Endothelial cell of umbilical vein (primary cell): ENCODE measurements at regions of chr4 and their contacts with region 1.

Region 1: DNA sequence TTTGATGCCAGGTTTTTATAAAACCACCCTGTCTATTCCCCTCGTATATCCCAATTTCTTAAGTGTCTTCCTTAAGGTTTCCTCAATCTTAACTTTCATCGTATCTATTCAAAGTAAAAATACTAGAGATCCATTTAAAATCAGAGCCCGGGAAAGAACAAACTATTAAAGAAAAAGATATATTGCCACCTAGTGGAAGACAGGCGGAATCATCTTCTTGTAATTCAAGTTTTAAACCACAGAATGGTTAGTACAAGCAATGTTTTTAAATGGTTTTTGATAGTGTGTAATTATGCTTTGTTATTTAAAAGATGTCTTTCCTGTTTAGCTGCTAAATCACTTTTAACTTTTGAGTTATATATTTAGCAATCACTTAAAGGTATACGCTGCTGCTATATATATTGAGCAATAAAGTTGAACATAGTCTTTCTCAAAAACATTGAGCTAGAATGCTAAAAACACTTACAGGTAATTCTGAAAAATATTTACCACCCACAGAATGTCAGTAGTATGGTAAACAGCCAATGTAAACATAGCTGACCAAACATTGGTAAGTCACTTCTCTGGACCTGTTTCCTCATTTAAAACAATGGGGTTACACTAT is 18.2 kb downstream of the PRDM8 start:
- DNase-seq: peak; percentile 44
- H3K4me3 ChIP-seq: no peak overlapping the region
- H3K27ac ChIP-seq: no peak overlapping the region
- H3K4me1 ChIP-seq: no peaks in the 10 kb centered on the region
- H3K27me3 ChIP-seq: peaks cover 20 to 47% of the 10 kb centered on the region in 2 experiments
- CTCF ChIP-seq: peak; percentile 33 to 38
- POLR2A ChIP-seq: no peak

Region 2: GRCh38 chr4:79042079-79042674 is 1173.4 kb before region 1 on chr4:
- CTCF ChIA-PET with region 1: interaction called, 19 read pairs
- POLR2A ChIA-PET with region 1: no interaction called
- dilution Hi-C with region 1: no loop called
- intact Hi-C with region 1: loop called (anchors 1 kb)
- DNase-seq: peak; percentile 32
- H3K4me3 ChIP-seq: no peak overlapping the region
- H3K27ac ChIP-seq: no peak overlapping the region
- H3K4me1 ChIP-seq: no peaks in the 10 kb centered on the region
- H3K27me3 ChIP-seq: no peaks in the 10 kb centered on the region
- CTCF ChIP-seq: peak; percentile 11 to 15
- POLR2A ChIP-seq: no peak

Region 3: DNA sequence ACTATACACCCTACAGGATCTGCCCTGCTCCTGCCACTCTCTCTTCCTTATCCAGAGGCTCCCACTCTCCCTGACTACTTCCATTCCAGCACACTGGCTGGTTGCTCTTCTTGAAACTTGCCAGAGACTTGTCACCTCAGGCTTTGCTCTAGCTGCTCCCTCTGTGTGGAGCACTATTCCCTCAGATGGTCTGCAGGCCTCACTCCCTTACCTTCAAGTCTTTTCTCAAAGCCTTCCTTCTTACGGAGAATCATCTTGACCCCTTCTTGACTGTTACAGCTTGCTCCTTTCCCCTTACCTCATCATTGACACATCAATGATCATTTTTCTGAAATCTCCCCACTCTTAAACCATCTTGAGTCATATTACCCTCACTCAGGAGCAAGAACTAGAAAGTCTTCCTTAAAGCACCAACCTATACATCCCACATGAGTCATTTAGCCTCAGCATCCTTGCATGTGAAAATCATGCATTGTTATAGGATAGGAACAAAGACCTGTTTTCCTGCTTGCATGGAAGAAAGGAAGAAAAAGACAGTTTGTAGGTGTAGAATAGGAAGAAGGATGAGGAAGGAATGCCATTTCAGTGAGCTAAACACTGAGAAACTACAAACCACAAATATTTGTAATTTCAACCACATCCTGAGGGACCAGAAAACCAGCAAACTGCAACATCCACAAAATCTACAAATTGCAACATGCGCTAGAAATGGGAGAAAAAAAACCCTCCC is 198.3 kb before region 1 on chr4:
- CTCF ChIA-PET with region 1: no interaction called
- POLR2A ChIA-PET with region 1: no interaction called
- dilution Hi-C with region 1: no loop called
- intact Hi-C with region 1: no loop called
- DNase-seq: peak; percentile 3
- H3K4me3 ChIP-seq: no peak overlapping the region
- H3K27ac ChIP-seq: peak overlapping the region; percentile 63
- H3K4me1 ChIP-seq: peaks cover 29% of the 10 kb centered on the region
- H3K27me3 ChIP-seq: no peaks in the 10 kb centered on the region
- CTCF ChIP-seq: no peak
- POLR2A ChIP-seq: no peak

Region 4: DNA sequence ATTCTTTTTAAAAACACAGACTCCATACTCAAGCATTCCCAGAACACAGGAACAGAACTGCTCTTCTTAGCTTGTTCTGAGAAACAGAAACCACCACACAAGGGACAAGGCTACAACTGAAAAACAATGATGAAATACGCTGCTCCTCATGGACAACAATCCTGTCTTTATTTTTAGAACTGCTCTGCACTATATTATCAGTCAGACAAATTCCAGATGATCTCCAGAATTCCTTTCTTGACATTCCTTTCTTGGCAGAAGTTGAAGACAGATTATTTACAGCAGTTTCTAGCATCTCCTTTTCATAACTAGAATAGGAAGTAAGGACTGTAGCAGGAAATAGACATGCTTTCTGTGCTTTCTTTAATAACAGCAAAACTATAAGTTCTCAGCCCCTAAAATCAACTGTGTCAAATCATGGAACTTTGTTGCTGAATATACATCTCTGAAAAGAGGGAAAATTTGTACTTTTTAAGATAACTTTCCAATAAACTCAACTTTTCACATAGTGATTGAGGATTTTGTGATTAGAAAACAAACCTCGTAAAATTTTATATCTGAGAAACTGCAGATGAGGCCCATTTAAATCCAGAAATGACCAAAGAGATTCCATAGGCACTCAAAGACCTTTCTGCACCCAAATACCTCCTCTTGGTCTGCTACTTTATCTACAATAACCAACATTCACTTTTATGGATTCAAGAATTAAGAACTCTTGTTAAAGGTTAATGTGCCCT is 178.4 kb before region 1 on chr4:
- CTCF ChIA-PET with region 1: no interaction called
- POLR2A ChIA-PET with region 1: no interaction called
- dilution Hi-C with region 1: no loop called
- intact Hi-C with region 1: no loop called
- DNase-seq: peak; percentile 64
- H3K4me3 ChIP-seq: peak overlapping the region in 1 of 3 experiments; percentile 37
- H3K27ac ChIP-seq: peak overlapping the region; percentile 70
- H3K4me1 ChIP-seq: peaks cover 38% of the 10 kb centered on the region
- H3K27me3 ChIP-seq: no peaks in the 10 kb centered on the region
- CTCF ChIP-seq: no peak
- POLR2A ChIP-seq: no peak

Region 5: DNA sequence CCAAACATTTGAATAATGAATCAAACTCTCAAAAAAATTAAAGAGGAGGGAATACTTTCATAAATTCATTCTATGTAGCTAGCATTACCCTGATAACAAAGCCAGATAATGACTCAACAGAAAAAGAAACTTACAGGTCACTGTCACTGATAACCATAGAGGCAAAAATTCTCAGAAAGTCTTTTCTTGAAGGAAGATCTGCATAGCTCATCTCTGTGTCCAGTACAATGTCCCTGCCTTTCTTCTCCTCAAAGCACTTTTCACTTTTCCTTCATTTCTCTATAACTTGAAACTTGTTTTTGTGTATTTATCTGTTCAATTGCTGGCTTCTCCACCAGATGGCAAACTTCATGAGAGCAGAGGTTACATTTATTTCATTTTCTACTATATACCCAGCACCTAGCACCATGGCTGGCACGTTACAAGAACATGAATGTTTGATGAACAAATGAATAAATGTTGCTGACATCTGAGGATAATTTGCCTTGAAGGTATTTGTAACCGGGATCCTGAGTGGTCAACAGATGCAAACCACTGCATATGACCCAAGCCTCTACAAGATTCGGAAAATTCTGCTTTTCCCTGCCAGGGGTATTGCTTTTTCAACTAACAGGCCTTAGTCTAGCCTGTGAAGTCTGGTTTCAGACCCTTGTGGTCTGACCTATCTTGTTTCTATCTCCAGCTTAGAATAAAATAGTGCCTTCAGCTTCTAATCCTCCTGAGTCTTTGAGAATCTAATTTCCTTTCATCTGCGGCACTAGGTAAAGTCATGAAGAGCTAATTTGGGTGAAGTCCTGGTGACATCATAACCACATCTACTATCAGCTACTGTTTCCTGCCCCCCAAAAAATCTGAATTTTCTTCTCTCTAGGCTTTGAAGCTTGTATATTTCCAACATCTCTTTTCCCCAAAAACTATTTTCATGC is 90.0 kb before region 1 on chr4:
- CTCF ChIA-PET with region 1: interaction called, 7 read pairs
- POLR2A ChIA-PET with region 1: no interaction called
- dilution Hi-C with region 1: no loop called
- intact Hi-C with region 1: loop called (anchors 1 kb)
- DNase-seq: peak; percentile 65
- H3K4me3 ChIP-seq: no peak overlapping the region
- H3K27ac ChIP-seq: peak overlapping the region; percentile 82
- H3K4me1 ChIP-seq: peaks cover 43% of the 10 kb centered on the region
- H3K27me3 ChIP-seq: no peaks in the 10 kb centered on the region
- CTCF ChIP-seq: peak; percentile 40
- POLR2A ChIP-seq: no peak

Region 6: DNA sequence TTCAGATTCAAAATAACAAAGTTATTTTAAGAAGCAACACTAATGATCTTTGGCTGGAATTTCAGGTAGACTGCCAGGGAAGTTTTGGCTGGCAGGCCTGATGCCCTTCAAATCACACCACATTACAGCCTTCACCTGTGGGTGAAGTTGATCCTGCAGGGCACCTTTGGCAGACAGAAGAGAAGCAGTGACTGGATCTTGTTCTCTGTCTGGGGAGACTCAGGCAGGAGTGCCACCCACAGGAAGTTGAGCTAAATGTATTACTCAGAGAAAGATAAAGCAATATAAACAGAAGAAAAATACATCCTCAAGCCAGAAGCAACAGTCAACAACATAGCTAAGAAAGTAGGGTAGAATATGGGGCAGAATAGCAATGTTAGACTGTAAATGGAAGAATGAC is 107.2 kb after region 1 on chr4:
- CTCF ChIA-PET with region 1: interaction called, 56 read pairs
- POLR2A ChIA-PET with region 1: no interaction called
- dilution Hi-C with region 1: no loop called
- intact Hi-C with region 1: no loop called
- DNase-seq: peak; percentile 24
- H3K4me3 ChIP-seq: no peak overlapping the region
- H3K27ac ChIP-seq: no peak overlapping the region
- H3K4me1 ChIP-seq: no peaks in the 10 kb centered on the region
- H3K27me3 ChIP-seq: no peaks in the 10 kb centered on the region
- CTCF ChIP-seq: no peak
- POLR2A ChIP-seq: no peak

Region 7: GRCh38 chr4:81052119-81053068 is 836.8 kb after region 1 on chr4:
- CTCF ChIA-PET with region 1: interaction called, 3 read pairs
- POLR2A ChIA-PET with region 1: no interaction called
- dilution Hi-C with region 1: no loop called
- intact Hi-C with region 1: loop called (anchors 5 kb)
- DNase-seq: peak; percentile 52
- H3K4me3 ChIP-seq: no peak overlapping the region
- H3K27ac ChIP-seq: no peak overlapping the region
- H3K4me1 ChIP-seq: no peaks in the 10 kb centered on the region
- H3K27me3 ChIP-seq: no peaks in the 10 kb centered on the region
- CTCF ChIP-seq: peak; percentile 56
- POLR2A ChIP-seq: no peak